ENCODE measurements at regions of chr4 and their contacts with region 1.

Region 1: GRCh38 chr4:149065753-149066152 is 623.5 kb upstream of the NR3C2 start:
- DNase-seq: no peak
- ATAC-seq: no peak
- H3K4me3 ChIP-seq: no peak overlapping the region
- H3K27ac ChIP-seq: no peak overlapping the region
- H3K4me1 ChIP-seq: no peaks in the 10 kb centered on the region
- H3K27me3 ChIP-seq: no peaks in the 10 kb centered on the region
- CTCF ChIP-seq: no peak
- POLR2A ChIP-seq: no peak
- RAD21 ChIP-seq: no peak

Region 2: DNA sequence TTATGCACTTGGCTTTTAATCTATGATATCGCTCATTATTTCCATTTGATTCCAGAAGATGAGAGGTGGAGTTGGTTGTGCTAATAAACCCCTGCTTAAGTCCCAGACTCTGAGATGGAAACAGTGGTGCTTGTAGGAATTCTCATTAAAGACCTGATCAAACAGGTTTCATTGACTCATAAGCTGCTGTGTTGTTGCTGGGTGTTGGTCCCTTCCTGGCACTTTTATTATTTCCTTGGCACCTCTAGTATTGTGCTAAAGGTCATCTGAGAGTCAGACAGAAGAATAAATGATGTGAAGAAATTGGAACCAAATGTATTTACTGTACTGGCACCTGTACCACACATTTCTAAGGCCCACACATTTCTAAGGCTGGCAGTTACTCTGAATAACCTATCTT is 78.8 kb before region 1 on chr4:
- CTCF ChIA-PET with region 1: no interaction called
- POLR2A ChIA-PET with region 1: no interaction called
- dilution Hi-C with region 1: no loop called
- in situ Hi-C with region 1: no loop called
- intact Hi-C with region 1: no loop called
- DNase-seq: no peak
- ATAC-seq: no peak
- H3K4me3 ChIP-seq: no peak overlapping the region
- H3K27ac ChIP-seq: no peak overlapping the region
- H3K4me1 ChIP-seq: no peaks in the 10 kb centered on the region
- H3K27me3 ChIP-seq: no peaks in the 10 kb centered on the region
- CTCF ChIP-seq: no peak
- POLR2A ChIP-seq: no peak
- RAD21 ChIP-seq: no peak

Region 3: GRCh38 chr4:149077181-149077580 is 11.4 kb after region 1 on chr4:
- CTCF ChIA-PET with region 1: no interaction called
- POLR2A ChIA-PET with region 1: no interaction called
- dilution Hi-C with region 1: no loop called
- in situ Hi-C with region 1: no loop called
- intact Hi-C with region 1: loop called (anchors 1 kb)
- DNase-seq: peak; percentile 56
- ATAC-seq: no peak
- H3K4me3 ChIP-seq: no peak overlapping the region
- H3K27ac ChIP-seq: no peak overlapping the region
- H3K4me1 ChIP-seq: peaks cover 3% of the 10 kb centered on the region; the same call in 1 of the 2 replicates
- H3K27me3 ChIP-seq: no peaks in the 10 kb centered on the region
- CTCF ChIP-seq: no peak
- POLR2A ChIP-seq: no peak
- RAD21 ChIP-seq: no peak

Measured in IMR-90 (cell line).